Sciatic nerve (tissue), 2 donors: ENCODE measurements at regions of chr20 and their contacts with region 1.

Region 1: GRCh38 chr20:21315138-21315537 is 12.0 kb downstream of the XRN2 start:
- DNase-seq: no peak
- ATAC-seq: no peak

Region 2: DNA sequence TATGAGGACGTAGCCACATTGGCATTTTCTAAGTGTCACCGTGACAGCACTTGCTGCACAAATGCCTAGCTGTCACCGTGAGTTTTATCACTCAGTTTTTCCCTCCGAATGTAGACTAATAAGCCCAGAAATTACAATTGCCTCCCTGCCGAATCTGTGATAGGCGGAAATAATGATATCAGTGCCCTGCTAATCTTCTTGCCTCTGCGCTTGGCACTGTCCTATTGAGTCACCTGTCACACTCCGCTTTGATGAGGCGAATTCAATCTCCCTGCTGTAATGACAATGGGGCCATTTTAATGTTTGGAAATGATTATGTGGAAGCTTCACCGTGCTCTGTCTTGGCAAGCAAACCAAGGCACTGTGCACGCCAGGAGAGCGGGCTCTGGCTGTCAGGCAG is 321.8 kb before region 1 on chr20:
- intact Hi-C with region 1: loop called (anchors 5 kb)
- DNase-seq: no peak
- ATAC-seq: no peak